CD14-positive monocyte (primary cell): ENCODE measurements at regions of chr16 and their contacts with region 1.

Region 1: GRCh38 chr16:68064791-68065365 is 20.3 kb upstream of the NFATC3 start:
- DNase-seq: peak; percentile 59 to 72 (median 65)
- H3K4me3 ChIP-seq: peak overlapping the region in 1 of 3 experiments; percentile 48
- H3K4me3 Mint-ChIP-seq: no peak overlapping the region
- H3K27ac ChIP-seq: peak overlapping the region; percentile 77 to 90
- H3K27ac Mint-ChIP-seq: peak overlapping the region; percentile 52 to 96 (median 89)
- H3K4me1 ChIP-seq: peaks cover 58 to 59% of the 10 kb centered on the region in 2 donors
- H3K4me1 Mint-ChIP-seq: peaks cover 60% of the 10 kb centered on the region
- H3K27me3 ChIP-seq: no peaks in the 10 kb centered on the region
- H3K27me3 Mint-ChIP-seq: peaks cover 0 to 4% (median 0%) of the 10 kb centered on the region in 3 donors
- CTCF ChIP-seq: peak; percentile 93

Region 2: GRCh38 chr16:67816240-67817031 is 248.4 kb before region 1 on chr16:
- intact Hi-C with region 1: loop called (anchors 1 to 10 kb)
- DNase-seq: peak; percentile 77 to 82 (median 79)
- H3K4me3 ChIP-seq: no peak overlapping the region
- H3K4me3 Mint-ChIP-seq: no peak overlapping the region
- H3K27ac ChIP-seq: no peak overlapping the region
- H3K27ac Mint-ChIP-seq: peak overlapping the region in 1 of 7 donors; percentile 37
- H3K4me1 ChIP-seq: no peaks in the 10 kb centered on the region
- H3K4me1 Mint-ChIP-seq: peaks cover 2% of the 10 kb centered on the region
- H3K27me3 ChIP-seq: no peaks in the 10 kb centered on the region
- H3K27me3 Mint-ChIP-seq: peaks cover 0 to 6% (median 3%) of the 10 kb centered on the region in 3 donors
- CTCF ChIP-seq: peak; percentile 100

Region 3: DNA sequence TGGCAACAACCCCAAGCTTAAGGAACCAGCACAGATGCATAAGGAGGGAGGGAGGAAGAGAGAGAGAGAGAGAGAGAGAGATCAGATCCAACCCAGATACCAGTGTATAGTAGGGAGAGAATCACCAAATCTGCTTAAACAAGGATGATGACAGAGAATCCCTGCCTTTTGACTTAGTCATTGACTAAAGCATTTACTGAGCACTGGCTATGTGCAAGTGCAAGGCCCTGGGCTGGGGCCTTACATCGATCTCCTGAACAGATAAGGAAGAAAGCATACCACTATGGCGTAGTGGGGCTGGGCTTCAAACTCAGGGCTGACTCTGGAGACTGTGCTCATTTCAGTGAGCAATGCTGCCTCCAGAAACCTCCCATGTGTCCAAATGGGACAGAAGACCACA is 242.4 kb before region 1 on chr16:
- intact Hi-C with region 1: loop called in 1 of 2 experiments (anchors 10 kb)
- DNase-seq: no peak
- H3K4me3 ChIP-seq: no peak overlapping the region
- H3K4me3 Mint-ChIP-seq: no peak overlapping the region
- H3K27ac ChIP-seq: no peak overlapping the region
- H3K27ac Mint-ChIP-seq: no peak overlapping the region
- H3K4me1 ChIP-seq: no peaks in the 10 kb centered on the region
- H3K4me1 Mint-ChIP-seq: no peaks in the 10 kb centered on the region
- H3K27me3 ChIP-seq: no peaks in the 10 kb centered on the region
- H3K27me3 Mint-ChIP-seq: peaks cover 0 to 2% (median 0%) of the 10 kb centered on the region in 3 donors
- CTCF ChIP-seq: no peak

Region 4: DNA sequence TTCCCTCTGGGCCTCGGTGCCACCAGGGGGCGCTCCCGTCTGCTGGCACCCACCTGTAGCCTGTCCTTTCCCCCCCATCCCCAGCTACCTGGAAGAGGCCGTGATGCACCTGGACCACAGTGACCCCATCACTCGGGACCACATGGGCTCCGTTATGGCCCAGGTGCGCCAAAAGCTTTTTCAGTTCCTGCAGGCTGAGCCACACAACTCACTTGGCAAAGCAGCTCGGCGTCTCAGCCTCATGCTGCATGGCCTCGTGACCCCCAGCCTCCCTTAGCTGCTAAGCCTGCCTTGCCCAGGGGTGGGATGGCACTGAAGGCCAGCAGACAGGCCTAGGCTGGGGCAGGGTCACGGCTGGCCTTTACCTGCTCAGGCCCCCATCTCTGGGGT is 181.0 kb before region 1 on chr16:
- intact Hi-C with region 1: loop called (anchors 2 to 5 kb)
- DNase-seq: peak; percentile 27 to 53 (median 47)
- H3K4me3 ChIP-seq: no peak overlapping the region
- H3K4me3 Mint-ChIP-seq: no peak overlapping the region
- H3K27ac ChIP-seq: peak overlapping the region in 1 of 2 donors; percentile 11
- H3K27ac Mint-ChIP-seq: peak overlapping the region in 1 of 7 donors; percentile 43
- H3K4me1 ChIP-seq: no peaks in the 10 kb centered on the region
- H3K4me1 Mint-ChIP-seq: no peaks in the 10 kb centered on the region
- H3K27me3 ChIP-seq: no peaks in the 10 kb centered on the region
- H3K27me3 Mint-ChIP-seq: peaks cover 0 to 2% (median 2%) of the 10 kb centered on the region in 3 donors
- CTCF ChIP-seq: peak; percentile 93

Region 5: DNA sequence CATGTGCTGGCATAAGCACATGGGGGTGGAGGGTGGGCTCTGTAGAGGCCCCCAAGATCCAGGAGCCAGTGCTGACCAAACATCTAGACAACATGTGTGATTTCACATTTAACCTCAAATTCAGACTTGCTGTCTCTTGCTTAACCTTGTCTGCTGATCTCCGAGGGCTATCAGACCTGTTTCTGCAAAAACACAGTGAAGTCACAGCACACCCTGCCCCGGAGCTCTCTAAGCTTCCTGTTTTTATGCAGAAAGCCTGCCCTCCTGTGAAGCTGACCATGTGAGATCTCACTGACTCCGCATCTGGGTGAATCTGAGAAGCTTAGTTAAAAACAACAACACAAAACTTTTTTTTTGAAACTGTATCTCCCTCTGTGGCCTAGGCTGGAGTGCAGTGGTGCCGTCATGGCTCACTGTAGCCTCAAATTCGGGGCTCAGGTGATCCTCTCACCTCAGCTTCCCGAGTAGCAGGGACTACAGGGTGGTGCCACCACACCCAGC is 59.0 kb before region 1 on chr16:
- intact Hi-C with region 1: no loop called
- DNase-seq: peak; percentile 88 to 94 (median 92)
- H3K4me3 ChIP-seq: peak overlapping the region in 1 of 3 experiments; percentile 29
- H3K4me3 Mint-ChIP-seq: peak overlapping the region; percentile 39 to 67
- H3K27ac ChIP-seq: peak overlapping the region; percentile 93 to 97
- H3K27ac Mint-ChIP-seq: peak overlapping the region; percentile 99 to 100 (median 99)
- H3K4me1 ChIP-seq: peaks cover 53 to 57% of the 10 kb centered on the region in 2 donors
- H3K4me1 Mint-ChIP-seq: peaks cover 47% of the 10 kb centered on the region
- H3K27me3 ChIP-seq: no peaks in the 10 kb centered on the region
- H3K27me3 Mint-ChIP-seq: peaks cover 0 to 2% (median 0%) of the 10 kb centered on the region in 3 donors
- CTCF ChIP-seq: no peak